ENCODE measurements at regions of chr4 and their contacts with region 1.

Region 1: DNA sequence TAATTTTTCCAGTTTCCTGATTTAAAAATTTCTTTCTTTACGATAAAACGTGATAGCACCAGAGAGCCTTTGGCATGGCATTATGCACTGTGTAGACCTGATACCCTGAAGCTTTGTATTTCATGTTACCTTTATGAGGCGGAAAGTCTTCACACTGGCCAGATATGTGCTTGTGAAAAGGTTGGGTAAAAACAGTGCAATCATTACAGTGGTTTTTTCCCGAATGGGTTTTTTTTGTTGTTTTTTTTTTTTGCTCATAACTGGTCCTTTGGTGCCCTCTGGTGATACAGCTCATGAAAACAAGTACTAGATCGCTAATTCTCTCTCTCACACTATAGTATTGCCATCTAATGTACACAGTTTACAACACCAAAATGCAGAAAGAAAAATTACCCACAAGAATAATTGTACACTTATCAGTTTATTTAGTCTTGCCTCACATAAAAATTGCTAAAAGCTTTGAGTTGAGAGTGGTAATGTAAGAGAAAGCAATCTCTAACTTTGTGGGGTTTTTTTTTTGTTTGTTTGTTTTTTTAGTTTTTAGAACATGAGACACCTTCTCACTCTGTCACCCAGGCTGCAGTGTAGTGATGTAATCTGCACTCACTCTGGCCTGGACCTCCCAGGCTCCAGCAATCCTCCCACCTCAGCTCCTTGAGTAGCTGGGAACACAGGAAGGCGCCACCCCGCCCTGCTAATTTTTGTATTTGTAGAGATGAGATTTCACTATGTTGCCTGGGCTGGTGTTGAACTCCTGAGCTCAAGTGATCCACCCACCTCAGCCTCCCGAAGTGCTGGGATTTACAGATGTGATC is 21.3 kb downstream of the SPCS3 start:
- DNase-seq: no peak

Region 2: GRCh38 chr4:175807547-175807946 is 533.5 kb before region 1 on chr4:
- intact Hi-C with region 1: no loop called
- DNase-seq: no peak

Region 3: GRCh38 chr4:175947117-175947722 is 393.9 kb before region 1 on chr4:
- intact Hi-C with region 1: loop called (anchors 5 kb)
- DNase-seq: no peak

Region 4: DNA sequence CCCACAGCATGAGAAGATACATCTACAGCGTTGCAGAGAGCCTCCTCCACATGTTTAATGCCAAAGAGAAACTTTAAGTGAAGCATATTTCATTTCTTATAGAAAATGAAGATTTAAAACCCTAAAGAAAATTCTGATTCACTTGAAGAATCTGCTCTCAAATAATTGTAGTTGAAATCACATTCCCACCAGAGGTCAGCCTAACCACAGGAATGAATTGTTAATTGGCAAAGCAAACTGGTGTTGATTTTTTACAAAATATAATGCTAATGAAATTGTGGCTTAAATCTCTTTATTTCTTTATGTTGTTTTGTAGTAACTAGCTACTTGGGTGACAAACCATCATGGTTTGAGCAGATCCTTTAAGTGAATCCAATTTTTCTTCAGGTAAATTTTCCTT is 306.6 kb before region 1 on chr4:
- intact Hi-C with region 1: loop called (anchors 1 kb)
- DNase-seq: no peak

Region 5: GRCh38 chr4:176150356-176150682 is 190.8 kb before region 1 on chr4:
- intact Hi-C with region 1: loop called (anchors 5 kb)
- DNase-seq: no peak